ENCODE measurements at regions of chr5 and their contacts with region 1.

Region 1: DNA sequence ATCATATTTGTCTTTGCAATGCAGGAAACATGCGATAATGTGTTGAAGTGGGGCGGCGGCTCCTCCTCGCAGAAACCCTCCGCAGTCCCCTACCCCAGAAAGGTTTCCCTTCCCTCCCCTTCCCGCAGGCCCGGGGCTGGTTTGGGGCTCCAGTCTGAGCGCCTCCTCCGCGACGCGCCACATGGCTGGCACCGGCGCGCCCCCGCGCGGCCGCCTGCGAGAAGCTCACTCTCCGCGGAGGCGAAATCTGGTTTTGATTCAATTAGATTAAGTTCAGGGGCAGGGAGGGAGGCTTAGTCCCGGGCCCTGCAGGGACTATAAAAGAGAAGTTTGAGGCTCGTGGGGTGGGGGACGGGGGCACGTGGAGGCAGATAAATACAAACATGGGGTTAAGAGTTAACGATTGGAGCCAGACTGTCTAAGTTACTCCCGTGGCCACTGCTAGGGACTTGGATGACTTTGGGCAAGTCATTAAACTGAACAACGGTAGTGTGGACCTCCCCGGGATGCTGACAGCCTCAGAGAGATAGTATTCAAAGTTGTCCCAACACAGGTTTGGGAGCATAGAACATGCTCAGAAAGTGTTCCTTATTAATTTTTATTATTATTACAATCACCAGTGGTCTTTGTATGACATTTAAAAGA is 69.4 kb downstream of the MSX2 start:
- DNase-seq: peak; percentile 50
- H3K4me3 Mint-ChIP-seq: no peak overlapping the region
- H3K27ac Mint-ChIP-seq: no peak overlapping the region
- H3K4me1 Mint-ChIP-seq: peaks cover 5% of the 10 kb centered on the region
- H3K27me3 Mint-ChIP-seq: peaks cover 13% of the 10 kb centered on the region

Region 2: GRCh38 chr5:174418928-174419796 is 374.6 kb before region 1 on chr5:
- CTCF ChIA-PET with region 1: interaction called, 12 read pairs
- POLR2A ChIA-PET with region 1: no interaction called
- DNase-seq: peak; percentile 88
- H3K4me3 Mint-ChIP-seq: no peak overlapping the region
- H3K27ac Mint-ChIP-seq: no peak overlapping the region
- H3K4me1 Mint-ChIP-seq: peaks cover 10% of the 10 kb centered on the region
- H3K27me3 Mint-ChIP-seq: peaks cover 13% of the 10 kb centered on the region

Region 3: DNA sequence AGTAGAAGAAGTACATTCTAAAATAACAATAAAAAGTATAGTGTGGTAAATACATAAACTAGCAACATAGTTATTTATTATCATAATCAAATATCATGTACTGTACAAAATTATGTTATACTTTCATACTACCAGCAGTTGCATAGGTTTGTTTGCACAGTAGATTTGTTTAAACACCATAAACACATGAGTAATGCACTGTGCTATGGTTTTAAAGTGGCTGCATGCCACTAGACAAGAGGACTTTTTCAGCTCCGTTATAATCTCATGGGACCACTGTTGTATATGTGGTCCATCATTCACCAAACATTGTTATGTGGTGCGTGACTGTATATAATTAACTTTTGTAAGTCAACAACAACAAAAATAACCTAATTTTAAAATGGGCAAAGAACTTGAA is 512.6 kb after region 1 on chr5:
- CTCF ChIA-PET with region 1: no interaction called
- POLR2A ChIA-PET with region 1: no interaction called
- DNase-seq: no peak
- H3K4me3 Mint-ChIP-seq: no peak overlapping the region
- H3K27ac Mint-ChIP-seq: no peak overlapping the region
- H3K4me1 Mint-ChIP-seq: no peaks in the 10 kb centered on the region
- H3K27me3 Mint-ChIP-seq: no peaks in the 10 kb centered on the region

Measured in activated CD4-positive, alpha-beta T cell treated with anti-CD3 and anti-CD28 coated beads, Interleukin-2, amount 10 ng/mL, durations not matched to agents 7 days and 5 days (primary cell).